Activated T-helper 2 cell treated with anti-CD3 and anti-CD28 coated beads, Interferon-gamma antibody, Interleukin-2, Interleukin-4, amounts not matched to agents 10 μg/mL and 5 μg/mL and 100 μg/mL, durations not matched to agents 14 hours and 24 hours and 36 hours (primary cell): ENCODE measurements at regions of chr13 and their contacts with region 1.

Region 1: DNA sequence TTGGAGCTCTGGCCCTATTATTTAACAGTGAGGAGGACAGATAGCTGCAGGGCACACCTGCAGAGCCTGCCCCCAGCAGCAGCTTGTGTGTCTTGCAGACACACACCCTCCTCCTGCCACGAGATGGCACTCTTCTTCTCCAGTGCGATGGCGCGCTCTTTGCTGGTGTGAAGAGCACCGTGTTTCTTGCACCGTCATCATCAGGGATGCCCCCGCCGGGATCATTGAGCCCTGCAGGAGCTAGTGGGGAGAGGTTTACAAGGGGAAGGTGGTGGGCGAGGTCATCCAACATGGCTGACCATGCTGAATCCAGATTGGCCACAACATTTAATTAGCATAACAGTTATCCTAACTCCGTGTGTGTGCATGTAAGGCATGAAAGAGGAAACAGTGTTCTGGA is 105.6 kb downstream of the RAB20 start:
- DNase-seq: peak; percentile 50
- H3K4me3 Mint-ChIP-seq: no peak overlapping the region
- H3K27ac Mint-ChIP-seq: no peak overlapping the region
- H3K4me1 Mint-ChIP-seq: peaks cover 3% of the 10 kb centered on the region
- H3K27me3 Mint-ChIP-seq: peaks cover 15% of the 10 kb centered on the region

Region 2: GRCh38 chr13:110593430-110594130 is 137.6 kb after region 1 on chr13:
- intact Hi-C with region 1: loop called (anchors 10 kb)
- DNase-seq: no peak
- H3K4me3 Mint-ChIP-seq: no peak overlapping the region
- H3K27ac Mint-ChIP-seq: no peak overlapping the region
- H3K4me1 Mint-ChIP-seq: peaks cover 1% of the 10 kb centered on the region
- H3K27me3 Mint-ChIP-seq: peaks cover 23% of the 10 kb centered on the region